Activated T-helper 2 cell treated with anti-CD3 and anti-CD28 coated beads, Interferon-gamma antibody, Interleukin-2, Interleukin-4, amounts not matched to agents 10 μg/mL and 5 μg/mL and 100 μg/mL, durations not matched to agents 14 hours and 24 hours and 36 hours (primary cell): ENCODE measurements at regions of chr20 and their contacts with region 1.

Region 1: DNA sequence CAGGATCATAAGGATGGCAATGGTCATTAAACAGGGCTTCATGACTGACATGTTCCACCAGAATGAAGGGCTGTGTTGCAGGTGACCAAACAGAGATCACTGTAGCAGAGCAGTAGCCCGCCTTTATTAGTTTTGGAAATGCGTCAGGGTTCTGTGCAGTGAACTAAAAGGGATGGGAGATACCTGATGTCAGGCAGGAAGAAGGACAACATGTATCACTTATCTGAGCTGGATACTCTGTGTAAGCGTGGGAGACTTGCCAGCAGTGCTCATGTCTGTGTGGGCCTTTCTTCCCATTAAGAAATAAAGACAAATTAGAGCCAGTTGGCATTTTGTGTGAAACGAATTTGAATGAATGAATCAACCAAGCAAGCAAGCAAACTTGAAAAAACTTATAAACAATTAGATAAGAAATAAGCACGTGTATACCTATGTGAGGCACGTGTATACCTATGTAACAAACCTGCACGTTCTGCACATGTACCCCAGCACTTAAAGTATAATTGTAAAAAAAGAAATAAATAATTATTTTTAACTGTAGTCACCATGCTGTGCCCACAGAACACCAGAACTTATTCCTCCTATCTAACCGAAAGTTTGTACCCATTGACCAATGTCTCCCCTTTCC is at the start of gene DEFB116:
- DNase-seq: no peak
- H3K4me3 Mint-ChIP-seq: no peak within 1 kb of the TSS
- H3K27ac Mint-ChIP-seq: no peak within 1 kb of the TSS
- H3K4me1 Mint-ChIP-seq: no peaks in the 10 kb centered on the region
- H3K27me3 Mint-ChIP-seq: no peaks in the 10 kb centered on the region
- total RNA-seq, gene DEFB116: not detected in 2 replicates

Region 2: GRCh38 chr20:29443819-29444218 is 1864.8 kb before region 1 on chr20:
- intact Hi-C with region 1: loop called (anchors 5 kb)
- DNase-seq: no peak
- H3K4me3 Mint-ChIP-seq: no peak overlapping the region
- H3K27ac Mint-ChIP-seq: no peak overlapping the region
- H3K4me1 Mint-ChIP-seq: peaks cover 2% of the 10 kb centered on the region
- H3K27me3 Mint-ChIP-seq: peaks cover 2% of the 10 kb centered on the region